GM18951 (cell line): ENCODE measurements at regions of chr12 and their contacts with region 1.

Region 1: DNA sequence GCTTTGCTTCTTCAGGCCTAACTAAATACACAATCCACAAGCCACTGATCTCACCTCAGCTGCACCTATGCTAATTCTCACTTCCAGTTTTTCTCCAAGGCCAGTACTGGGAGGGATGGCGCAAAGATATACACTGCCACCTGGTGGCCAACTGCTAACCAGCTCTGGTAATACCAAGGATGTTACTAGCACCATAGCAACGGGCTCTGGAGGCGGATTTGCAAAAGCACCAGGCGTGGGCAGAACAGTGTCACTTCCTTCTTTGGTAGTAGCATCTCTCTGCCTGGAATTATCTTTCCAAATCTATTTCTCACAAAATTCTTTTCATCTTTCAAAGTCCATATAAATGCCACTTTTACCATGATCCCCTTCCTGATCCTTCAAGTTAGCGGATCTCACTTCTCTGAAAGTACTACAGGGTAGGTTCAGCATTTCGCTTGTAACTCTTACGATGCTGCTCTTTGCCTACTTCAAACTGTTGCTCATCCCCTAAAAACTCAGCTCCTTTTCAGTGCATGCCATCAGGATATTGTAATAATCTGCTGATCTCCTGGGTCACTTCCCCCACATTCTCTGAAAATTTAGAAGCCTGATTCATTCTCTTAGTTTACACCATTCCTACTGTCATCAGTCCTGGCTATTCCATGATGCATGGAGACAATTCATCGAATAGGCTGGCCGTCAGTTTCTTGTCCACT is 37.1 kb upstream of the FOXJ2 start:
- POLR2A ChIP-seq: no peak

Region 2: GRCh38 chr12:7869127-7869526 is 126.3 kb before region 1 on chr12:
- in situ Hi-C with region 1: loop called (anchors 10 kb)
- POLR2A ChIP-seq: no peak

Region 3: DNA sequence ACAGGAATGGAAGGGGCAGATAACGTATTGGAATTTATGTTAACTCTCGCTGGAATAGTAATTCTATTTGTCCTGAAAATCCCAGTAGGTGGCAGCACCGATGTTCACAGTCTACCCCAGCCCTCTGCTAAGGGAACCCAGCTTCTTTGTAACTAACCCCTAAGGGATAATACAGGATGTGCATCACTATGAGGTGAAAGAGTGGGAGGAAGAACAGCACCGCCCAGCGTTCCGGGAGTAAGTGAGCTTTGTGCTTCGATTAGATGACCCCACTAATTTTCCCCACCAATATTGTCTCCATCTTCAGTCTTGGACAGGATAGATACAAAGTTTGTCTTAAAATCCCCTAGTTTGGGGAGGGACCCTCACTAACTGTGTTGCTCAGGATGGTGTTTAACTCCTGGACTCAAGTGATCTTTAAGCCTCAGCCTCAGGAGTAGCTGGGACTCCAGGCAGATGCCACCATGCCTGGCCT is 62.1 kb before region 1 on chr12:
- in situ Hi-C with region 1: loop called (anchors 10 kb)
- POLR2A ChIP-seq: peak; percentile 27

Region 4: GRCh38 chr12:8590842-8591550 is 595.6 kb after region 1 on chr12:
- in situ Hi-C with region 1: no loop called
- POLR2A ChIP-seq: no peak